Left ventricle myocardium inferior (tissue), 1 donor: ENCODE measurements at regions of chr16 and their contacts with region 1.

Region 1: GRCh38 chr16:15704545-15704987 is 54.5 kb downstream of the NDE1 start:
- DNase-seq: peak; percentile 69
- H3K4me3 ChIP-seq: no peak overlapping the region
- H3K27ac ChIP-seq: no peak overlapping the region
- H3K4me1 ChIP-seq: no peaks in the 10 kb centered on the region
- H3K27me3 ChIP-seq: no peaks in the 10 kb centered on the region
- CTCF ChIP-seq: peak; percentile 86

Region 2: GRCh38 chr16:15643048-15643945 is 61.3 kb before region 1 on chr16 and contains the start of gene MARF1:
- intact Hi-C with region 1: loop called (anchors 10 kb)
- DNase-seq: peak; percentile 100
- H3K4me3 ChIP-seq: peak within 1 kb of the TSS; percentile 93
- H3K27ac ChIP-seq: peak within 1 kb of the TSS; percentile 97
- H3K4me1 ChIP-seq: peaks cover 39% of the 10 kb centered on the region
- H3K27me3 ChIP-seq: no peaks in the 10 kb centered on the region
- CTCF ChIP-seq: peak; percentile 61
- total RNA-seq, gene MARF1: 46.0 TPM